ENCODE measurements at regions of chr2 and their contacts with region 1.

Region 1: GRCh38 chr2:28047681-28048080 is 157.2 kb downstream of the BABAM2 start:
- DNase-seq: no peak
- ATAC-seq: no peak
- H3K4me3 ChIP-seq: no peak overlapping the region
- H3K27ac ChIP-seq: peak overlapping the region in 1 of 12 donors; percentile 76
- H3K4me1 ChIP-seq: peaks cover 0 to 24% (median 6%) of the 10 kb centered on the region in 12 donors
- H3K27me3 ChIP-seq: no peaks in the 10 kb centered on the region
- CTCF ChIP-seq: no peak
- POLR2A ChIP-seq: no peak

Region 2: DNA sequence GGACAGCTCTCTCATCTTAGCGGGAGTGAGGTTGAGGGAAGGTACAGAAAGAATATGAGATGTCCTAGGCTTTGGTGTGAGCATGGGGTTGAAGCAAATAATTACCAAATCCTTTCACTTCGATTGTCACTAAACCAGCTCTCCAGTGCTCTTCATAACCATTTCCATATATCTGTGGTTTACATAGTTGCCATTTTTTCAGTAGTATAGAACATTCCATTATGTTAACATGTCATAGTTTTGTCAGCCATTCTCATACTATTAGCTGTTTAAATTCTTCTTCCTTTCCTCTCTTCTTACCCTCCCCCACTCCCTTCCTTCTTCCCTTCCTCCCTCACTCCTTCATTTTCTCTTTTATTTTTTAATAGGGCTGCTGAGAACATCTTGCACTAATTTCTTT is 48.7 kb after region 1 on chr2:
- intact Hi-C with region 1: loop called in 1 of 10 experiments (anchors 10 kb)
- DNase-seq: no peak
- ATAC-seq: no peak
- H3K4me3 ChIP-seq: no peak overlapping the region
- H3K27ac ChIP-seq: peak overlapping the region in 1 of 12 donors; percentile 32
- H3K4me1 ChIP-seq: peaks cover 0 to 45% (median 6%) of the 10 kb centered on the region in 12 donors
- H3K27me3 ChIP-seq: no peaks in the 10 kb centered on the region
- CTCF ChIP-seq: no peak
- POLR2A ChIP-seq: no peak

Region 3: DNA sequence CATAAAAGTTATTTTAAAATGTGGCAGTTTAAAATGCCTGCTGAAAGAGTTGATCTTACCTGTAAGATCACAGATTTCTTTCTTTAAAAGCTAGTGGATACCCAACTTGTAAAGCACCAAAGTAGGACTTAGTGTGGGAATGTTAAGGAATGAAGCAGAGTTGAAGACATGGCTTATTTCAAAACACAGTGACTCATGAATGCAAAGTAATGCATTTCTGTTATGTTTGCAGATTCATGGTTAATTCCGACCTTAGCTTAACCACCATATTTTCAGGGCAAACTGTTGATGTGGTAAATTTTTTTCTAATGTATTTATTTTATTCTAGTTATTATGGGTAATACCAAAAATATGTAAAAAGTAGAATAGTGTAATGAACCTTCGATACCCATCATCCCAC is 138.2 kb after region 1 on chr2:
- intact Hi-C with region 1: no loop called
- DNase-seq: no peak
- ATAC-seq: no peak
- H3K4me3 ChIP-seq: no peak overlapping the region
- H3K27ac ChIP-seq: no peak overlapping the region
- H3K4me1 ChIP-seq: no peaks in the 10 kb centered on the region
- H3K27me3 ChIP-seq: no peaks in the 10 kb centered on the region
- CTCF ChIP-seq: no peak
- POLR2A ChIP-seq: no peak

Measured in heart left ventricle (tissue), 16 donors.